Panc1 (cell line): ENCODE measurements at regions of chr2 and their contacts with region 1.

Region 1: GRCh38 chr2:28009732-28010131 is 119.2 kb downstream of the BABAM2 start:
- DNase-seq: no peak
- ATAC-seq: no peak
- H3K4me3 ChIP-seq: no peak overlapping the region
- H3K27ac ChIP-seq: no peak overlapping the region
- H3K4me1 ChIP-seq: no peaks in the 10 kb centered on the region
- H3K27me3 ChIP-seq: no peaks in the 10 kb centered on the region
- CTCF ChIP-seq: no peak

Region 2: DNA sequence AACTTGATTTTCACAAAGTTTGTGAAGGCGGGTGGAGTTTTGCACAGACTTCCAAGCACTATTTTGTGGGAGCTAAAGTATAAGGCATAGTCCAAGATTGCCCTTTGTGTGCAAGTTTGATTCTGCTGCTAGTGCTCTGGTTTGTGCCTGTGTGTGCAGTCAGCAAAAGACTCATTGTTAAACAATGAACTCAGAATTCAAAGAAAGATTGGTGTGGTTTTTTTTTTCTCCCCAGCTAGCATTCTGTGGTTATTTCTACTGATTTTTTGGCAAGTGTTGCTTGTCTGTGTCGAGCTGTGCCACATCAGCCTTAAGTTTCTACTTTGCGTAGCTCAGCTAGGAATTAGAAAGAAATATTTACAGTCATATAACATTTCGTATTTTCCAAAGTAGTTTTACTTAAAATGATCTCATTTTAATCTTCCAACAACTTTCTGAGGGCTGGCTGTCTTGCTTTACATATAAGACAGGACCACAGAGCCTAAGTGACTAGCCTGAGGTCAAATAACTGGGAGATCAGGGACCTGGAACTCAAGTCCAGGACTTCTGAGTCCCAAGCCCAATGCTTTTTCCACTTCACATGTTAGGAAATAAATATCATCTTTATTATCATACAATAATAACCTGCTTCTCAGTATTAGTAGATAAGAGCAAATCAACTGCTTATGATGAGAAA is 49.4 kb before region 1 on chr2:
- CTCF ChIA-PET with region 1: no interaction called
- POLR2A ChIA-PET with region 1: no interaction called
- in situ Hi-C with region 1: no loop called
- intact Hi-C with region 1: no loop called
- DNase-seq: no peak
- ATAC-seq: no peak
- H3K4me3 ChIP-seq: no peak overlapping the region
- H3K27ac ChIP-seq: no peak overlapping the region
- H3K4me1 ChIP-seq: peaks cover 2% of the 10 kb centered on the region
- H3K27me3 ChIP-seq: no peaks in the 10 kb centered on the region
- CTCF ChIP-seq: no peak

Region 3: GRCh38 chr2:28021898-28022297 is 12.2 kb after region 1 on chr2:
- CTCF ChIA-PET with region 1: no interaction called
- POLR2A ChIA-PET with region 1: interaction called, 10 read pairs
- in situ Hi-C with region 1: no loop called
- intact Hi-C with region 1: no loop called
- DNase-seq: no peak
- ATAC-seq: no peak
- H3K4me3 ChIP-seq: no peak overlapping the region
- H3K27ac ChIP-seq: no peak overlapping the region
- H3K4me1 ChIP-seq: no peaks in the 10 kb centered on the region
- H3K27me3 ChIP-seq: no peaks in the 10 kb centered on the region
- CTCF ChIP-seq: no peak